HCT116 (cell line): ENCODE measurements at regions of chr14 and their contacts with region 1.

Region 1: DNA sequence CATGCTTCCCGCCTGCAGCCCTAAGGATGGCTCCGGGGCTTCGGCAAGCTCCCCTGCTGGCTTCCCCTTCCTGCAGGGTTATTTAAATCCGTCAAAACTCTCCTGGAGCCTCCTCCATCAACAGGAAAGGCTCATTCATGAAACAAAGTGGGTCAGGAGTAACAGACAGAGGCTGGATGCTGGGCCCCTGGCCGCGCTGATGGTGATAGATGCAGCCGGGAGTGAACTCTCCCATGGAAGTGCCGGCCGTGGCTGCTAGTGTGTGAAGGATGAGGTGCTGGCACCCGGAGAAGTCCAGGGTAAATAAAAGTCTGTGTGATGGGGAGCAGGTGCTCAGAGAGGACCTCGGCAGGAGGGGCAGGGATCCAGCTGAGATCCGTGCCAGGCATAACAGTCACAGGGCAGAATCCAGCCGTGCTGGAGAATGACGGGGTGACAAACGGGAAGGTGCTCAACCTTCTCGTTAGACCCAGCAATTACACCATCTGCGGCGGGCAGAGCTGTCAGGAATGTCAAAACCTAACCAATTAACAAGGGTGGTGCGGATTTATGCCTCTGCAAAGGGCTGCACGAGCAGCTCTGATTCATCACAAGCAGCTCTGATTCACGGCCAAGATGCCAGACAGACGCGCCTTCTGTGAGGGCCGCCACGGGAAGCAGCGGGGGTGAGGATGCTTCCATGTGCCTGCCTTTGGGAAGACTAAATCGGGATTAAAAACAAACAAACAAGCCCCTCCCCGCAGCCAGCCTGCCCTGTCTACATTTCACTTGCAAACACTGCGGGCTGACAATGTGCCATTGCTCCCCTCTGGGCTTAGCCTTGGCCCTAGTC is 55.6 kb downstream of the SYNE3 start:
- DNase-seq: peak; percentile 37
- ATAC-seq: peak; percentile 88
- H3K4me3 ChIP-seq: peak overlapping the region in 1 of 2 experiments; percentile 4; a peak in 1 of 4 replicates
- H3K27ac ChIP-seq: no peak overlapping the region
- H3K4me1 ChIP-seq: peaks cover 11 to 14% of the 10 kb centered on the region in 2 experiments
- H3K27me3 ChIP-seq: peaks cover 16% of the 10 kb centered on the region; the same call in 1 of the 2 replicates
- CTCF ChIP-seq: no peak
- POLR2A ChIP-seq: no peak
- RAD21 ChIP-seq: no peak

Region 2: GRCh38 chr14:96464718-96465117 is 1003.9 kb after region 1 on chr14:
- CTCF ChIA-PET with region 1: no interaction called
- POLR2A ChIA-PET with region 1: no interaction called
- RAD21 ChIA-PET with region 1: no interaction called
- intact Hi-C with region 1: loop called (anchors 5 kb)
- DNase-seq: no peak
- ATAC-seq: no peak
- H3K4me3 ChIP-seq: no peak overlapping the region
- H3K27ac ChIP-seq: no peak overlapping the region
- H3K4me1 ChIP-seq: no peaks in the 10 kb centered on the region
- H3K27me3 ChIP-seq: no peaks in the 10 kb centered on the region
- CTCF ChIP-seq: no peak
- POLR2A ChIP-seq: no peak
- RAD21 ChIP-seq: no peak